Activated naive CD4-positive, alpha-beta T cell treated with anti-CD3 and anti-CD28 coated beads for 36 hours (primary cell): ENCODE measurements at regions of chr13 and their contacts with region 1.

Region 1: GRCh38 chr13:73894995-73895571 is 239.1 kb downstream of the KLF12 start:
- DNase-seq: no peak
- H3K4me3 Mint-ChIP-seq: no peak overlapping the region
- H3K27ac Mint-ChIP-seq: no peak overlapping the region
- H3K4me1 Mint-ChIP-seq: peaks cover 49% of the 10 kb centered on the region
- H3K27me3 Mint-ChIP-seq: no peaks in the 10 kb centered on the region

Region 2: GRCh38 chr13:73870970-73871935 is 23.8 kb before region 1 on chr13:
- CTCF ChIA-PET with region 1: no interaction called
- intact Hi-C with region 1: loop called (anchors 2 kb)
- DNase-seq: peak; percentile 43
- H3K4me3 Mint-ChIP-seq: no peak overlapping the region
- H3K27ac Mint-ChIP-seq: no peak overlapping the region
- H3K4me1 Mint-ChIP-seq: peaks cover 50% of the 10 kb centered on the region
- H3K27me3 Mint-ChIP-seq: no peaks in the 10 kb centered on the region

Region 3: GRCh38 chr13:74027161-74027779 is 132.2 kb after region 1 on chr13:
- CTCF ChIA-PET with region 1: no interaction called
- intact Hi-C with region 1: no loop called
- DNase-seq: no peak
- H3K4me3 Mint-ChIP-seq: peak overlapping the region; percentile 72
- H3K27ac Mint-ChIP-seq: peak overlapping the region; percentile 87
- H3K4me1 Mint-ChIP-seq: peaks cover 76% of the 10 kb centered on the region
- H3K27me3 Mint-ChIP-seq: no peaks in the 10 kb centered on the region